Activated T-helper 1 cell treated with anti-CD3 and anti-CD28 coated beads, Interleukin-12 subunit alpha, Interleukin-12 subunit beta, Interleukin-2, Interleukin-4 antibody, amounts not matched to agents 30 ng/mL and 10 ng/mL and 1 ng/mL, durations not matched to agents 14 hours and 24 hours and 36 hours (primary cell): ENCODE measurements at regions of chr6 and their contacts with region 1.

Region 1: GRCh38 chr6:96897383-96898240 is at the start of gene NDUFAF4:
- DNase-seq: peak; percentile 94
- H3K4me3 Mint-ChIP-seq: peak within 1 kb of the TSS; percentile 98
- H3K27ac Mint-ChIP-seq: peak within 1 kb of the TSS; percentile 98
- H3K4me1 Mint-ChIP-seq: peaks cover 21% of the 10 kb centered on the region
- H3K27me3 Mint-ChIP-seq: peaks cover 2% of the 10 kb centered on the region
- total RNA-seq, gene NDUFAF4: 73.4 and 74.1 TPM in 2 replicates

Region 2: DNA sequence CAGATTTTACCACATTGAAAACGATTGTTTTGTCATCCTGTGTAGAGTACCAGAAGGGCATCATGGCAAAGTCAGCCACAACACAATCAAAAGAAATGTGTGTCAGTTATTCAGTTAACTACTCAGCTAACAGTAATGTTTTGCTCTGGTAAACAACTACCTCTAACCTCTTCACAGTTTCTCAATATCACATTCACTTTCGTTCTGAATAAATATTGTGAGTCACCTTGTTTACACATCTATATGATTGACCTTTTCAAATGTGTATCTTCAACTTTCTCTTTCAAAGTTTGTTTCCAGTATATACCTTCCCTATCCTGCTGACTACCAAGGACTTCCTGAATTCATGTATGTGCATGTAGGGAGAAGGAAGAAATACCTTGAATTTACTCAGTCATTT is 592.6 kb before region 1 on chr6:
- intact Hi-C with region 1: loop called (anchors 10 kb)
- DNase-seq: no peak
- H3K4me3 Mint-ChIP-seq: no peak overlapping the region
- H3K27ac Mint-ChIP-seq: no peak overlapping the region
- H3K4me1 Mint-ChIP-seq: peaks cover 5% of the 10 kb centered on the region
- H3K27me3 Mint-ChIP-seq: no peaks in the 10 kb centered on the region

Region 3: GRCh38 chr6:96521644-96522464 is 375.8 kb before region 1 on chr6 and contains the start of gene UFL1:
- intact Hi-C with region 1: loop called (anchors 1 kb)
- DNase-seq: peak; percentile 89
- H3K4me3 Mint-ChIP-seq: peak within 1 kb of the TSS; percentile 100
- H3K27ac Mint-ChIP-seq: peak within 1 kb of the TSS; percentile 100
- H3K4me1 Mint-ChIP-seq: peaks cover 24% of the 10 kb centered on the region
- H3K27me3 Mint-ChIP-seq: no peaks in the 10 kb centered on the region
- total RNA-seq, gene UFL1: 22.0 and 22.7 TPM in 2 replicates

Region 4: GRCh38 chr6:96626759-96627364 is 270.8 kb before region 1 on chr6:
- intact Hi-C with region 1: loop called (anchors 1 kb)
- DNase-seq: no peak
- H3K4me3 Mint-ChIP-seq: no peak overlapping the region
- H3K27ac Mint-ChIP-seq: no peak overlapping the region
- H3K4me1 Mint-ChIP-seq: peaks cover 5% of the 10 kb centered on the region
- H3K27me3 Mint-ChIP-seq: peaks cover 11% of the 10 kb centered on the region

Region 5: GRCh38 chr6:96727144-96727543 is 170.5 kb before region 1 on chr6:
- intact Hi-C with region 1: no loop called
- DNase-seq: no peak
- H3K4me3 Mint-ChIP-seq: no peak overlapping the region
- H3K27ac Mint-ChIP-seq: no peak overlapping the region
- H3K4me1 Mint-ChIP-seq: no peaks in the 10 kb centered on the region
- H3K27me3 Mint-ChIP-seq: peaks cover 4% of the 10 kb centered on the region

Region 6: DNA sequence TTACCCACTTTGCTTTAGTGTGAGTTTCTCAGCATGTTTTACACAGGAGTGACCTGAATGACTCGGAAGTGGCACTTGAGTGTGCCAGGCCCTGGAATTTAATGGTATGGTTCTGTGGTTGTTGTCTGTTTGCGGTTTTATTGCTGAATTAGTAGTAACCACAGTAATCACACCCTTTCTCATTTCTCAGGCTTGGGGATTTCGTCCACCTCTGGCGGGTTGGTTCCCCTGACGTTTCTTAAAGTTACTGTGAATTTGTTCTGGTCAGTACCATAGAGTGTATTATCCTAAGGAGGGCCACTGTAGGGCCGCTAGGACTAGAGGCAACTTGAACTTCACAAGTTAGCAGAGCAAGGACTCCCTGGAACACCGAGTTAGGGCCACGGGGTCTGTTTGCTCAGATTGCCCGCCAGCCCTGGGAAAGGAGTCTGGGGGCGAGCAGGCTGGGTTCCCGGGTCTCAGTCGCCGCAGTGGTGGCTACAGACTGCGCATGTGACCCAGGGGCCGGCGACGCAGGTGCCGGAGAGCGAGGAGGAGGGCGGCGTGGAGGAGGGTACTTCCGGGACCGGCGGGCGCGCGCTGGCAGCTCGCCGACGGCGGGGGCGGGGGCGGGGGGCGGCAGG is 26.4 kb after region 1 on chr6:
- intact Hi-C with region 1: loop called (anchors 1 kb)
- DNase-seq: no peak
- H3K4me3 Mint-ChIP-seq: peak overlapping the region; percentile 87
- H3K27ac Mint-ChIP-seq: peak overlapping the region; percentile 85
- H3K4me1 Mint-ChIP-seq: peaks cover 33% of the 10 kb centered on the region
- H3K27me3 Mint-ChIP-seq: peaks cover 2% of the 10 kb centered on the region

Region 7: DNA sequence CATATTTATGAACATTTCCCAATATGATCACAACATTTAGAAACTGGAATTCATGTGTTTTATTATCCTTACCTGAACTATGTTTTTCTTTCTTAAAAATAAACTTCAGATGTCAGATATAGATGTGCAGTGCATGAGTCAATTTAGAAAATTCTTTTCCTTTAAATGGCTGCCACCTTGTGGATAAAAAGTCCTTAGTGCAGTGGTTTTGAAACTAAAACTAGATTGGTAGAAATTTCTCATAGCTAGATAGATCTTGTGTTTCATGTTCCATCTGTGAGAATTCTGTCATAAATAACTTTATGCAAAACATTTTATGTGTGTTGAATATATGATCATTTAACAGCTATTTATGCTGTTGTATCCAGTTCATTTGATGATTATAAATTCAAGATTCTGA is 161.9 kb after region 1 on chr6:
- intact Hi-C with region 1: loop called (anchors 1 kb)
- DNase-seq: no peak
- H3K4me3 Mint-ChIP-seq: no peak overlapping the region
- H3K27ac Mint-ChIP-seq: no peak overlapping the region
- H3K4me1 Mint-ChIP-seq: no peaks in the 10 kb centered on the region
- H3K27me3 Mint-ChIP-seq: peaks cover 3% of the 10 kb centered on the region

Region 8: GRCh38 chr6:97989451-97989850 is 1091.8 kb after region 1 on chr6:
- intact Hi-C with region 1: no loop called
- DNase-seq: no peak
- H3K4me3 Mint-ChIP-seq: no peak overlapping the region
- H3K27ac Mint-ChIP-seq: no peak overlapping the region
- H3K4me1 Mint-ChIP-seq: no peaks in the 10 kb centered on the region
- H3K27me3 Mint-ChIP-seq: no peaks in the 10 kb centered on the region